Left cardiac atrium (tissue), 4 donors: ENCODE measurements at regions of chr1 and their contacts with region 1.

Region 1: GRCh38 chr1:115456441-115456961 is 118.5 kb upstream of the NGF start:
- DNase-seq: no peak
- ATAC-seq: peak; percentile 70 to 78

Region 2: DNA sequence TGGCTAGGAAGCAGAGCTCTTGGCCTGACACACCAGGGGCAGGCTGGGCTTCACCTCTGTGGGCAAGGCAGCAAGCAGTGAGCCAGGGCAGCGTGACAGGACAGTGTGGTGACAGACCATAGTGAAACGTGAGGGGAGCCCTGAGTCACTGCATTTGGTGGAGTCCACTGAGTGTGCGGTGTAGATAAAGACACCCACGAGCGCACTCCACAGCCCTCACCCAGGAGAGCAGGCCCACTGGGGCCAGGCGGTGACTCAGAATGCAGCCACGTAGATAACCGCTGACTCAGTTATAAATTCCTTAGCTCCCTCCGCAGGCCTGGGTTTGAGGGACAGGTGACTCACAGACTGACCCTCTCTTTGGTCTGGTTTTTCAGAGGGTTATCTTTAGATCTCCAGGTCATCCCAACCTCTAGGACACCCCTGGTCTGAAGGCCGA is 277.1 kb before region 1 on chr1:
- intact Hi-C with region 1: loop called in 1 of 2 experiments (anchors 10 kb)
- DNase-seq: peak; percentile 57
- ATAC-seq: peak; percentile 69 to 96

Region 3: GRCh38 chr1:115282807-115283208 is 173.7 kb before region 1 on chr1:
- intact Hi-C with region 1: loop called in 1 of 2 experiments (anchors 10 kb)
- DNase-seq: peak; percentile 87
- ATAC-seq: peak; percentile 93 to 94

Region 4: GRCh38 chr1:115296981-115297380 is 159.5 kb before region 1 on chr1:
- intact Hi-C with region 1: no loop called
- DNase-seq: no peak
- ATAC-seq: no peak

Region 5: GRCh38 chr1:115496904-115497527 is 40.5 kb after region 1 on chr1:
- intact Hi-C with region 1: no loop called
- DNase-seq: no peak
- ATAC-seq: no peak